Calu3 (cell line): ENCODE measurements at regions of chr3 and their contacts with region 1.

Region 1: GRCh38 chr3:168493412-168494205 is 397.9 kb upstream of the GOLIM4 start:
- DNase-seq: no peak
- H3K4me3 Mint-ChIP-seq: no peak overlapping the region
- H3K27ac Mint-ChIP-seq: no peak overlapping the region
- H3K4me1 Mint-ChIP-seq: no peaks in the 10 kb centered on the region
- H3K27me3 Mint-ChIP-seq: no peaks in the 10 kb centered on the region
- CTCF ChIP-seq: no peak

Region 2: GRCh38 chr3:168457962-168458539 is 35.6 kb before region 1 on chr3:
- CTCF ChIA-PET with region 1: no interaction called
- intact Hi-C with region 1: loop called (anchors 1 kb)
- DNase-seq: no peak
- H3K4me3 Mint-ChIP-seq: no peak overlapping the region
- H3K27ac Mint-ChIP-seq: no peak overlapping the region
- H3K4me1 Mint-ChIP-seq: no peaks in the 10 kb centered on the region
- H3K27me3 Mint-ChIP-seq: no peaks in the 10 kb centered on the region
- CTCF ChIP-seq: no peak

Region 3: GRCh38 chr3:168545591-168545990 is 52.0 kb after region 1 on chr3:
- CTCF ChIA-PET with region 1: no interaction called
- intact Hi-C with region 1: no loop called
- DNase-seq: no peak
- H3K4me3 Mint-ChIP-seq: no peak overlapping the region
- H3K27ac Mint-ChIP-seq: no peak overlapping the region
- H3K4me1 Mint-ChIP-seq: no peaks in the 10 kb centered on the region
- H3K27me3 Mint-ChIP-seq: no peaks in the 10 kb centered on the region
- CTCF ChIP-seq: no peak